CD4-positive, alpha-beta T cell (primary cell): ENCODE measurements at regions of chr6 and their contacts with region 1.

Region 1: GRCh38 chr6:66029391-66029790 is 322.4 kb upstream of the EYS start:
- DNase-seq: no peak
- ATAC-seq: no peak
- H3K4me3 ChIP-seq: no peak overlapping the region
- H3K4me3 Mint-ChIP-seq: no peak overlapping the region
- H3K27ac ChIP-seq: no peak overlapping the region
- H3K27ac Mint-ChIP-seq: no peak overlapping the region
- H3K4me1 ChIP-seq: no peaks in the 10 kb centered on the region
- H3K4me1 Mint-ChIP-seq: no peaks in the 10 kb centered on the region
- H3K27me3 ChIP-seq: no peaks in the 10 kb centered on the region
- H3K27me3 Mint-ChIP-seq: no peaks in the 10 kb centered on the region
- CTCF ChIP-seq: no peak

Region 2: DNA sequence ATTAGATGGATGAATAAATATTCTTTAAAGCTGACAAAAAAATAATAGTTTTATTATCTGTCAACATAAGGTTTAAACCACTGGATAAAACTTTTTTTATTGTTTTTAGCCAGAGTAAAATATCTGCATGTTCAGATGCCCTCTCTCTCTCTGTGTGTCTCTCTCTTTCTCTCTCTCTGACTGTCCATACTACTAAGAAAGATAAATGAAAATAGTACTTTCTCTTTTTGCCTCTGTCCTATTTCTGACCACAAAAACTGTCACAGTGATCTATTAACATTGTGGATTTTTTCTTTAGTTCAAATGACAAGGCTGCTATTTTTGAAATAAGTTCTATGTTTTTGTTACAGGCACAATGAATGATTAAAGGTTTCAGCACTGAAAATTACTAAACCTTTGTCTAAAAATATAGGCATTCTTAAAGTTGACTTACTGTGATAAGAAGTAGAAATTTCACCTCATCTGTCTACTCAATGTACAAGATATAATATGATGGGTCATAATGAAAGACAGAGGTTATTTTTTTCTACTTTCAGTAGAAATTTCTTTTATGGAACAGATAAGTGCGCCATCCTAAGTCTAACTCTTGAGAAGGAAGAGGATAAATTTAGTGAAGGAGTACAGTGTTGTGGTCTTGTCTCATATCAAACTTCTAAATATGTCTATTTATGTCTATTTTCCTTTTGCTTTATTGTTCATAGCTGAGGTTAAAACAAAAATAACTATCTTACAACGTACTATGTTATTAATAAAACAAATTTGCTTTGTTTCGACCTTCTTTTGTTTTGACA is 19.5 kb after region 1 on chr6:
- CTCF ChIA-PET with region 1: no interaction called
- POLR2A ChIA-PET with region 1: no interaction called
- intact Hi-C with region 1: no loop called
- DNase-seq: no peak
- ATAC-seq: no peak
- H3K4me3 ChIP-seq: no peak overlapping the region
- H3K4me3 Mint-ChIP-seq: no peak overlapping the region
- H3K27ac ChIP-seq: no peak overlapping the region
- H3K27ac Mint-ChIP-seq: no peak overlapping the region
- H3K4me1 ChIP-seq: no peaks in the 10 kb centered on the region
- H3K4me1 Mint-ChIP-seq: no peaks in the 10 kb centered on the region
- H3K27me3 ChIP-seq: no peaks in the 10 kb centered on the region
- H3K27me3 Mint-ChIP-seq: no peaks in the 10 kb centered on the region
- CTCF ChIP-seq: no peak

Region 3: GRCh38 chr6:66103954-66104353 is 74.6 kb after region 1 on chr6:
- CTCF ChIA-PET with region 1: no interaction called
- POLR2A ChIA-PET with region 1: no interaction called
- intact Hi-C with region 1: loop called in 1 of 2 experiments (anchors 2 kb)
- DNase-seq: no peak
- ATAC-seq: no peak
- H3K4me3 ChIP-seq: no peak overlapping the region
- H3K4me3 Mint-ChIP-seq: no peak overlapping the region
- H3K27ac ChIP-seq: no peak overlapping the region
- H3K27ac Mint-ChIP-seq: no peak overlapping the region
- H3K4me1 ChIP-seq: no peaks in the 10 kb centered on the region
- H3K4me1 Mint-ChIP-seq: no peaks in the 10 kb centered on the region
- H3K27me3 ChIP-seq: no peaks in the 10 kb centered on the region
- H3K27me3 Mint-ChIP-seq: no peaks in the 10 kb centered on the region
- CTCF ChIP-seq: no peak